Activated CD8-positive, alpha-beta T cell treated with anti-CD3 and anti-CD28 coated beads for 36 hours (primary cell): ENCODE measurements at regions of chr12 and their contacts with region 1.

Region 1: GRCh38 chr12:47032644-47033043 is 46.8 kb upstream of the PCED1B start:
- DNase-seq: peak; percentile 12
- ATAC-seq: peak; percentile 81
- H3K4me3 Mint-ChIP-seq: no peak overlapping the region
- H3K27ac Mint-ChIP-seq: peak overlapping the region; percentile 10
- H3K4me1 Mint-ChIP-seq: peaks cover 37% of the 10 kb centered on the region
- H3K27me3 Mint-ChIP-seq: no peaks in the 10 kb centered on the region
- CTCF ChIP-seq: peak; percentile 84

Region 2: GRCh38 chr12:46921048-46921763 is 111.4 kb before region 1 on chr12:
- CTCF ChIA-PET with region 1: no interaction called
- POLR2A ChIA-PET with region 1: no interaction called
- intact Hi-C with region 1: no loop called
- DNase-seq: no peak
- ATAC-seq: no peak
- H3K4me3 Mint-ChIP-seq: no peak overlapping the region
- H3K27ac Mint-ChIP-seq: no peak overlapping the region
- H3K4me1 Mint-ChIP-seq: no peaks in the 10 kb centered on the region
- H3K27me3 Mint-ChIP-seq: peaks cover 8% of the 10 kb centered on the region
- CTCF ChIP-seq: no peak

Region 3: DNA sequence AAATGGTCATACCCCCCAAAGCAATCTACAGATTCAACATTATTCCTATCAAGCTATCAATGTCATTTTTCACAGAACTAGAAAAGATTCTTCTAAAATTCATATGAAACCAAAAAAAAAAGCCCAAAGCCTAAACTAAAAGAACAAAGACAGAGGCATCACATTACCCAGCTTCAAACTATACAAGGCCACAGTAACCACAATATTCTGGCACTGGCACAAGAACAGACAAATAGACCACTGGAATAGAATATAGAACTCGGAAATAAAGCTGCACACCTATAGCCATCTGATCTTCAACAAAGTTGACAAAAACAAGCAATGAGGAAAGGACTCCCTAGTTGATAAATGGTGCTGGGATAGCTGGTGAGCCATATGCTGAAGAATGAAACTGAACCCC is 42.4 kb before region 1 on chr12:
- CTCF ChIA-PET with region 1: no interaction called
- POLR2A ChIA-PET with region 1: no interaction called
- intact Hi-C with region 1: no loop called
- DNase-seq: no peak
- ATAC-seq: no peak
- H3K4me3 Mint-ChIP-seq: no peak overlapping the region
- H3K27ac Mint-ChIP-seq: no peak overlapping the region
- H3K4me1 Mint-ChIP-seq: no peaks in the 10 kb centered on the region
- H3K27me3 Mint-ChIP-seq: peaks cover 7% of the 10 kb centered on the region
- CTCF ChIP-seq: no peak

Region 4: GRCh38 chr12:47054659-47055058 is 22.0 kb after region 1 on chr12:
- CTCF ChIA-PET with region 1: interaction called, 12 read pairs
- POLR2A ChIA-PET with region 1: no interaction called
- intact Hi-C with region 1: no loop called
- DNase-seq: no peak
- ATAC-seq: no peak
- H3K4me3 Mint-ChIP-seq: no peak overlapping the region
- H3K27ac Mint-ChIP-seq: no peak overlapping the region
- H3K4me1 Mint-ChIP-seq: no peaks in the 10 kb centered on the region
- H3K27me3 Mint-ChIP-seq: no peaks in the 10 kb centered on the region
- CTCF ChIP-seq: no peak

Region 5: DNA sequence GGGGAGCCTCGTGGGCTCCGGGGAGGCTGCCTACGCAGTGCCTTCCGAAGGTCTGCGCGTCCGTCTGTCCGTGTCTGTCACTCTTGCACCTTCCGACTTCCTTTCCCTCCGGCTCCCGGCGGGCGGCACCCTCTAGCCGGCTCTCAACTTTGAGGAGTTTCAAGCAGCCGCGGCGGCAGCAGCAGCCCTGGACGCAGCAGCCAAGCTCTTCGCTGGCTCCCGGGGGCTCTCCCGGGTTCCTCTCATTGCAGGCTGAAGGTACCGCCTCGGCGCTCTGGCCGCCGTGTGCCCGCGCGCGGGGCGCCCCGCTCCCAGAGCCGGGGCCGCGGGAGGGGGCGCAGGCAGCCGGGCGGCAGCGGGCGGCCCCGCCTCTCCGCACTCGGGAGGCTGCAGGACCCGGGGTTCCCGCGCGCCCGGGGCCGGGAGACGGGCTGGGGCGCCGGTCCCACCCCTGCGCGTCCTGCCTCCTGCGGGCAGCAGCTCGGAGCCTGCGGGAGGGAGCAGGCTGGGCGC is 46.9 kb after region 1 on chr12 and contains the starts of genes AMIGO2 and PCED1B:
- CTCF ChIA-PET with region 1: interaction called, 14 read pairs
- POLR2A ChIA-PET with region 1: no interaction called
- intact Hi-C with region 1: no loop called
- DNase-seq: peak; percentile 82
- ATAC-seq: peak; percentile 57
- H3K4me3 Mint-ChIP-seq: peak within 1 kb of the TSS; percentile 92
- H3K27ac Mint-ChIP-seq: peak within 1 kb of the TSS; percentile 97
- H3K4me1 Mint-ChIP-seq: peaks cover 72% of the 10 kb centered on the region
- H3K27me3 Mint-ChIP-seq: no peaks in the 10 kb centered on the region
- CTCF ChIP-seq: no peak
- total RNA-seq, gene AMIGO2: 12.1 to 12.5 TPM
- total RNA-seq, gene PCED1B: 117 to 119 TPM

Region 6: GRCh38 chr12:47216150-47216677 is 183.6 kb after region 1 on chr12:
- CTCF ChIA-PET with region 1: interaction called, 11 read pairs
- POLR2A ChIA-PET with region 1: interaction called, 4 read pairs
- intact Hi-C with region 1: no loop called
- DNase-seq: peak; percentile 87
- ATAC-seq: peak; percentile 52
- H3K4me3 Mint-ChIP-seq: peak overlapping the region; percentile 79
- H3K27ac Mint-ChIP-seq: peak overlapping the region; percentile 96
- H3K4me1 Mint-ChIP-seq: peaks cover 10% of the 10 kb centered on the region
- H3K27me3 Mint-ChIP-seq: no peaks in the 10 kb centered on the region
- CTCF ChIP-seq: no peak

Region 7: GRCh38 chr12:47307680-47308399 is 275.2 kb after region 1 on chr12:
- CTCF ChIA-PET with region 1: interaction called, 18 read pairs
- POLR2A ChIA-PET with region 1: no interaction called
- intact Hi-C with region 1: loop called (anchors 5 kb)
- DNase-seq: peak; percentile 74
- ATAC-seq: peak; percentile 88
- H3K4me3 Mint-ChIP-seq: peak overlapping the region; percentile 75
- H3K27ac Mint-ChIP-seq: peak overlapping the region; percentile 95
- H3K4me1 Mint-ChIP-seq: peaks cover 72% of the 10 kb centered on the region
- H3K27me3 Mint-ChIP-seq: no peaks in the 10 kb centered on the region
- CTCF ChIP-seq: peak; percentile 89

Region 8: DNA sequence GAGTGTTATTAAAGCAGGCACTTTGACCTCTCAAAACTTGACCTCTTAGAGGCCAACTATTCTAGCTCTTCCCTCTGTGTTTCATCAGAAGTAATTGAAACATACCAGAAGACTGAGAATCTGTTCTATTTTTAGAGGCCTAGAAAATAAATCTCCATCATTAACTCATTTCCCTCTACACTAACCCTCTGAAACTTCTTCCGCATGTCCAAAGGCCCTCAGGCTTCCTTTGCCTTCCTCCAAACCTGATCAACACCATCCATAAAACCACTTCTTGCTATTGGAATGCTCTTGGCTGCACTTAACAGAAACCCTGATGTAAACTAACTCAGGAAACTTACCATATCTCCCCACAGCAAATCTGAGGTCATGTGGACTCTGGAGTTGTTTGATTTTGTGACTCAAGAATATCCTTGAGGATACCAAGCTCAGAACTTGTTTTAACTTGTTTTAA is 476.8 kb after region 1 on chr12:
- CTCF ChIA-PET with region 1: no interaction called
- POLR2A ChIA-PET with region 1: no interaction called
- intact Hi-C with region 1: no loop called
- DNase-seq: no peak
- ATAC-seq: no peak
- H3K4me3 Mint-ChIP-seq: no peak overlapping the region
- H3K27ac Mint-ChIP-seq: no peak overlapping the region
- H3K4me1 Mint-ChIP-seq: peaks cover 10% of the 10 kb centered on the region
- H3K27me3 Mint-ChIP-seq: no peaks in the 10 kb centered on the region
- CTCF ChIP-seq: no peak

Region 9: DNA sequence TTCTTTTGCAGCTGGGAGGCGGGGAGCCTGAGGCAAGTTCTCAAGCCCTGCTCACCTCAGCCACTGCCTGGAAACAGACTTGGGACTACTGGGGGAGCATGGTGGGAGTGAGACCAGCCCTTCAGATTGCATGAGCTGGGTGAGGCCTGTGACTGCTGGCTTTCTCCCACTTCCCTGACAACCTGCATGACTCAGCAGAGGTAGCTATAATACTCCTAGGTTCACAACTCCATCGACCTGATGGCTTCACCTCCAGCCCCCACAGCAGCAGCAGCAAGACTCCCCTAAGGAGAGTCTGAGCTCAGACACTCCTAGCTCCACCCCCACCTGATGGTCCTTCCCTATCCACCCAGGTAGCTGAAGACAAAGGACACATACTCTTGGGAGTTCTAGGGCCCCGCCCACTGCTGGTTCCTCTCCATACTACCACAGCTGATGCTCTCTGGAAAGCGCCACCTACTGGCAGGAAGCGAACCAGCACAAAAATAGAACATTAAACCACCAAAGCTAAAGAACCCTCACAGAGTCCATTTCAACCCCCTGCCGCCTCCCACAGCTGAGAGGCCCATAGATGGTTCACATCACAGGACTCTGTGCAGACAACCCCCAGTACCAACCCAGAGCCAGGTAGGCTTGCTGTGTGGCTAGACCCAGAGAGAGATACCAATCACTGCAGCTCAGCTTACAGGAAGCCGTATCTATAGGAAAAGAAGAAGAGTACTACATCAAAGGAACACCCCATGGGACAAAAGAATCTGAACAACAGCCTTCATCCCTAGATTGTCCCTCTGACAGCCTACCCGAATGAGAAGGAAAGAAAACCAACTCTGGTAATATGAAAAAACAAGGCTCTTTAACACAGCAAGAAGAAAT is 604.5 kb after region 1 on chr12:
- CTCF ChIA-PET with region 1: interaction called, 13 read pairs
- POLR2A ChIA-PET with region 1: no interaction called
- intact Hi-C with region 1: no loop called
- DNase-seq: peak; percentile 72
- ATAC-seq: no peak
- H3K4me3 Mint-ChIP-seq: no peak overlapping the region
- H3K27ac Mint-ChIP-seq: no peak overlapping the region
- H3K4me1 Mint-ChIP-seq: peaks cover 7% of the 10 kb centered on the region
- H3K27me3 Mint-ChIP-seq: no peaks in the 10 kb centered on the region
- CTCF ChIP-seq: peak; percentile 50

Region 10: GRCh38 chr12:47686645-47687240 is 654.1 kb after region 1 on chr12:
- CTCF ChIA-PET with region 1: interaction called, 12 read pairs
- POLR2A ChIA-PET with region 1: no interaction called
- intact Hi-C with region 1: loop called (anchors 5 kb)
- DNase-seq: peak; percentile 27
- ATAC-seq: peak; percentile 73
- H3K4me3 Mint-ChIP-seq: no peak overlapping the region
- H3K27ac Mint-ChIP-seq: no peak overlapping the region
- H3K4me1 Mint-ChIP-seq: peaks cover 5% of the 10 kb centered on the region
- H3K27me3 Mint-ChIP-seq: no peaks in the 10 kb centered on the region
- CTCF ChIP-seq: peak; percentile 73